Right cardiac atrium (tissue), 5 donors: ENCODE measurements at regions of chr16 and their contacts with region 1.

Region 1: DNA sequence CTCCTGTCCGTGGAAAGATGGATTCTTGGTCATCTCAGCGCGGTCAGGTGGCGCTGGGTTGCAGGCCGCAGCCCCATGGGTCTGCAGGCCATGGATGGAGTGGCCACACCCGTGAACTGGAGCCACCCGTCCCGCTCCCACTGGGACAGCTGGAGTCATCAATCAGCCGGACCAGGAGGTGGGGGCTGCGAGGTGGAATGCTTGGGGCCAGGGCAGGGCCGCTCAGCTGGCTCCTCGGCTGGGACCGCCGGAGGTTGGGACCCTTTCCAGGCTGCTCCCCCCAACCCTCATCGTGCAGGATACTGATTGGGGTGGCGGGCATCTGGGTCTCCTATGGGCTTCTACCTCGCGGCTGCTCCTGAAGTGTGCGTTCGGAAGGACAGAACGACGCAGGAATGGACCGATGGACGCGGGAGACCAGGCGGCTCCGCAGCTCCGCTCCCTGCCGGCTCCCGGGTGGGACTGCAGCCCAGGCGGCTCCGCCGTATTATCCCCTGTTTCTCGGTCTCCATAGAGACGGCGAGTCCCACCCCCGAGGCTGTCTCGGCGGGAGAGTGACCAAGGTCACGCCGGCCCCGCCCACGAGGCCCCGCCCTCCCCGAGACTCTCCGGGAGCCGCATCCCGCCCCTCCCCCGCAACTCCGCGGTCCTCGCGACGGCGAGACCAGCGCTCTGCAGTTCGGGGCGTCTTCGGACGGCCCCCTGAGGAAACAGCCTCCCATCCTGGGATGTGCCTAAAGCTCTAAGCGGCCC is at the start of gene TPPP3:
- DNase-seq: peak; percentile 96 to 98 (median 98)
- ATAC-seq: peak; percentile 83 to 86
- H3K4me3 ChIP-seq: peak within 1 kb of the TSS; percentile 38
- H3K27ac ChIP-seq: peak within 1 kb of the TSS; percentile 54
- H3K4me1 ChIP-seq: peaks cover 25% of the 10 kb centered on the region
- H3K27me3 ChIP-seq: no peaks in the 10 kb centered on the region
- total RNA-seq, gene TPPP3: 21.9 to 183 (median 33.4) TPM

Region 2: DNA sequence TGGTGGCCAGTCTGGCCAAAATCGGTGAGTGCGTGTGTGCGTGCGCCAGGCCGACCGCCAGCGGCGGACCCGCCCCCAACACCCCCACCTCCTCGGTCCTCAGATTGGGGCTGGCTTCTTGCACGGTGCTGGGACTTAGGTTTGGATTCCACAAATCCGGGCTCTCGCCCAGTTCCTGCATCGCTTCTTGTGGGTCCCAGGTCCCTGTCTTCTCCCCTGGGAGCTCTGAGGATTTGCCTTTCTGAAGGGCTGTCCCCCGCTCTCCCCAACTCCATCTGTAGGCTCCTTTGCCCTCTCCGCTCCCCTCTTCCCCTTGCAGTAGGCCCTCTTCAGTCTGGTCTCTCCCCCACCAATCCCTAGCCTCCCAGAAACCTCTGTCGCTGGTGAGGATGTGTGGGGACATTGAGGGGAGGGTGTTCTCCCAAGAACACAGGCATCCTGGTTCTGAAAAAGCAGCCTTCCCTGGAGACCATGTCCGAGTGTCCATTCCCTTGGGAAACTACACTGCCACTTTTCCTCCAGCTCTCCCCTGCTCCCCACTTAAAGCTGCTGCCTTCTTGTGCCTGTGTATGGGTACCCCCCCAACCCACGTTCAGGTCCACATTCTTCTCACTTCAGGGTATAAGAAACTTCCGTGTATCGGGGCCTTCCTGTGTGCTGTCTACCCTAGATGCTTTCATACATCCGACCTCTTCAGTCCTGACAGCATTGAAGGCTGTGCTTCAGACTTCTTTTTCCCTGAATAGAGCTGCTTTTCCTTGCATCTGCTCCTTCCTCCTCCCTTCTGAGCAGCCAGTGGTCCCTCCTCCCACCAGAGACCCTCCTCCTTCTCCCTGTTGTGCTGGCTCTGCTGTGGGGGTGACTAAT is 143.8 kb before region 1 on chr16:
- intact Hi-C with region 1: loop called in 1 of 4 experiments (anchors 10 kb)
- DNase-seq: peak; percentile 0 to 64 (median 63)
- ATAC-seq: no peak
- H3K4me3 ChIP-seq: peak overlapping the region; percentile 58
- H3K27ac ChIP-seq: no peak overlapping the region
- H3K4me1 ChIP-seq: peaks cover 6% of the 10 kb centered on the region
- H3K27me3 ChIP-seq: no peaks in the 10 kb centered on the region

Region 3: DNA sequence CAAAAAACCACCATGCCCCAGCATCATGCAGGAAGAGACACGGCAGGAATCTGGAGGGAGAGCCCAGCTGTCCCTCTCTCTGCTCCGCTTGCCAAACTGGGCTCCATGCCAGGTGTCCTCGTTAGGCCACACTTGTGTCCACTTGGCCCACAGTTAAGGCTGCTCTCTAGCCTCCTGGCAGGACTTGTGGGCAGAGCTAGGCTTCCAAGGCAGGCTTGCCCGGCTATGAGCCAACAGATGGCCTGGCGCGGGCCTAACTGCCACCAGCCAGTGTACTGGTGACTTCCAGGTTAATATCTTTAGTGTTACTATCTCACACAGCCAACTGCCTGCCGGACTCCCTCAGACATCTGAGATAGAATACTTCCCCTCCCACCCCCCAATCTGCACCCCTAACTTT is 77.1 kb after region 1 on chr16:
- intact Hi-C with region 1: no loop called
- DNase-seq: peak; percentile 88 to 95 (median 94)
- ATAC-seq: peak; percentile 77 to 91
- H3K4me3 ChIP-seq: no peak overlapping the region
- H3K27ac ChIP-seq: no peak overlapping the region
- H3K4me1 ChIP-seq: peaks cover 14% of the 10 kb centered on the region
- H3K27me3 ChIP-seq: no peaks in the 10 kb centered on the region

Region 4: GRCh38 chr16:67608364-67608763 is 215.2 kb after region 1 on chr16:
- intact Hi-C with region 1: no loop called
- DNase-seq: no peak
- ATAC-seq: no peak
- H3K4me3 ChIP-seq: no peak overlapping the region
- H3K27ac ChIP-seq: no peak overlapping the region
- H3K4me1 ChIP-seq: no peaks in the 10 kb centered on the region
- H3K27me3 ChIP-seq: no peaks in the 10 kb centered on the region

Region 5: DNA sequence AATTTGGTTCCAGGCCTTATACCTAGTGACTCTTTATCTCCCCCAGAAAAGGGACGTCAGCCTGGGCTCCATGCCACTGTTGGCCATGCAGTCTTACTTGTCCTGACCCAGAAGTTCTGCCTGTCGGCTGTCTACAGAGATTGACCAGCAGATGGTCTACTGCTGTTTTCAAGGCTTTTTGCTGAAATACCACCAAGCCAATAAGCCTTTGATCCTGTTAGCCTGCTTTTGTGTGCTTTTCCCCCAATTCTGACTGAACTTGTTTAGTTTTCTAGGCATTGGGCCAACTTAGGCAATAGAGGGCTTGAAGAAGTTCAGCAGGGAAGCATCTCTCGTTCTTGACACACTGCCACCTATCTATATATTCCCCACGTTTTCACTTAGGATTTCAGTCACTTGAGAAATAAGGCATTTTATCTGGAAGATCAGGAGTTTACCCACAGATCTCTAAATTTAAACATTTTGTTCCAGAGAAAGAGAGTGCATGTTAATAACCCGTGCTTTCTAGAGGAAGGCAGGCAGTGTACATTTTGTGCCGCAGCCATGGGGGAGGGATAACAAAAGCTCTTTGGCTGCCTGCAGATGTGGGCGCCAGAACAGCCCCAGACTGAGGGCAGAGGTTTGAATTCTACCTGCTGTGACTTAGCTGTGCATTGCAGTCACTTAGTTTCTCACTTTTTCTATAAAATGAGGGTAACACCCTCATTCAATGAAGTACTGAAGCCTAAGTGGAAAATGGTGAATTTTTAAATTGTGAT is 239.4 kb after region 1 on chr16:
- intact Hi-C with region 1: no loop called
- DNase-seq: peak; percentile 52 to 82 (median 80)
- ATAC-seq: peak; percentile 53 to 64
- H3K4me3 ChIP-seq: no peak overlapping the region
- H3K27ac ChIP-seq: no peak overlapping the region
- H3K4me1 ChIP-seq: no peaks in the 10 kb centered on the region
- H3K27me3 ChIP-seq: no peaks in the 10 kb centered on the region